ENCODE measurements at regions of chr1 and their contacts with region 1.

Region 1: GRCh38 chr1:23777979-23778814 is at the start of gene PITHD1:
- DNase-seq: peak; percentile 86
- ATAC-seq: peak; percentile 90
- H3K4me3 Mint-ChIP-seq: peak within 1 kb of the TSS; percentile 84
- H3K27ac Mint-ChIP-seq: peak within 1 kb of the TSS; percentile 94
- H3K4me1 Mint-ChIP-seq: peaks cover 51% of the 10 kb centered on the region
- H3K27me3 Mint-ChIP-seq: no peaks in the 10 kb centered on the region
- total RNA-seq, gene PITHD1: 62.3 to 67.9 TPM

Region 2: GRCh38 chr1:23790696-23791515 is 12.7 kb after region 1 on chr1 and contains the start of gene LYPLA2:
- CTCF ChIA-PET with region 1: interaction called, 8 read pairs
- POLR2A ChIA-PET with region 1: interaction called, 25 read pairs
- DNase-seq: peak; percentile 92
- ATAC-seq: peak; percentile 90
- H3K4me3 Mint-ChIP-seq: peak within 1 kb of the TSS; percentile 95
- H3K27ac Mint-ChIP-seq: peak within 1 kb of the TSS; percentile 97
- H3K4me1 Mint-ChIP-seq: peaks cover 36% of the 10 kb centered on the region
- H3K27me3 Mint-ChIP-seq: no peaks in the 10 kb centered on the region
- total RNA-seq, gene LYPLA2: 84.2 to 88.2 TPM

Region 3: DNA sequence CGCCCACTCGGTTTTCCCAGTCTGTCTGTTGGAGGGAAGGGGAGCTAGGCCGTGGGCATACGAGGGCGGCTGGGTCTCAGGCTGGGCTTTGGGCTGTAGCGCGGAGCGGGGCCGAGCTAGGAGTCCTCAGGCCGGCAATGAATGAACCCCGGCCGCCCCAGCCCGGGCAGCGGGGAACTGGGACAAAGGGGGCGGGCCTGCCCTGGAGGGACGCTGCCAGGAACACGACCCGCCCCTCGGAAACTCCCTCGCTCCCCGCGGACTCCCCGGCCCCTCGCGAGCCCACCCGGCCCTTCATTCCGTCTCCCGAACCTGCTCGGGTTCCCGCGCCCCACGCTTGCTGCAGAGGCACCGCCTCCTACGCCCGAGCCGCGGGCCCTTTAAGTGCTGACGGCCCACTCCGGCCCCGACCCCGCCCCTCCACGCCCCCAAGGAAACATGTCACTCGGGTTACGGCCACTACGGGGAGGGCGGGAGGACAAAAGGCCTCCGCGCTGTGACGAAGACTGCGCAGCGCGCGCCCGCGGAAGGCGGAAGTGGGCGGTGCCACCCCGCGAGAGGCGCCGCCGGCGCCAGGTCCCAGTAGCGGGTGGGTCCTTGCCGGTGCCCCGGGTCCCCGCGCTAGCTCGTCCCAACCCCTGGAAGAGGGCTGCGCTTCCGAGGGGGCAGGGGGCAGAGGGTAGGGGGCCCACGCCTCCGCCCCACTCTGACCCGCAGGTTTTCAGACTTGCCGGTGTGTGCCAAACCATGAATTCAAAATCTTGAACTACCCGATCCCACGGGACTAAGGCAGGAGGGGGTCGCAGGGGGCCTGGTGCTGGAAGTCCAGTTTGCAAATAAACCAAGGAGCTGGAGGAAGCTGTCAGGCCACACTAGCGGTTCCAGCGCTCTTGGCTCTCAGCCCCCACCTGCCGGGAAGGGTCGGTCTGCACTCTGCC is 22.5 kb after region 1 on chr1 and contains the start of gene GALE:
- CTCF ChIA-PET with region 1: interaction called, 7 read pairs
- POLR2A ChIA-PET with region 1: interaction called, 12 read pairs
- DNase-seq: peak; percentile 99
- ATAC-seq: peak; percentile 89
- H3K4me3 Mint-ChIP-seq: peak within 1 kb of the TSS; percentile 97
- H3K27ac Mint-ChIP-seq: peak within 1 kb of the TSS; percentile 96
- H3K4me1 Mint-ChIP-seq: peaks cover 21% of the 10 kb centered on the region
- H3K27me3 Mint-ChIP-seq: no peaks in the 10 kb centered on the region
- total RNA-seq, gene GALE: 27.6 to 31.9 TPM

Measured in activated CD8-positive, alpha-beta T cell treated with anti-CD3 and anti-CD28 coated beads, Interleukin-2, amount 10 ng/mL, durations not matched to agents 7 days and 5 days (primary cell).